SK-N-SH (cell line): ENCODE measurements at regions of chr2 and their contacts with region 1.

Region 1: GRCh38 chr2:45585267-45585861 is 25.7 kb downstream of the SRBD1 start:
- DNase-seq: peak; percentile 41
- H3K4me3 ChIP-seq: no peak overlapping the region
- H3K27ac ChIP-seq: no peak overlapping the region
- H3K4me1 ChIP-seq: no peaks in the 10 kb centered on the region
- H3K27me3 ChIP-seq: no peaks in the 10 kb centered on the region
- CTCF ChIP-seq: peak; percentile 81
- EP300 ChIP-seq: no peak
- RAD21 ChIP-seq: peak; percentile 66

Region 2: DNA sequence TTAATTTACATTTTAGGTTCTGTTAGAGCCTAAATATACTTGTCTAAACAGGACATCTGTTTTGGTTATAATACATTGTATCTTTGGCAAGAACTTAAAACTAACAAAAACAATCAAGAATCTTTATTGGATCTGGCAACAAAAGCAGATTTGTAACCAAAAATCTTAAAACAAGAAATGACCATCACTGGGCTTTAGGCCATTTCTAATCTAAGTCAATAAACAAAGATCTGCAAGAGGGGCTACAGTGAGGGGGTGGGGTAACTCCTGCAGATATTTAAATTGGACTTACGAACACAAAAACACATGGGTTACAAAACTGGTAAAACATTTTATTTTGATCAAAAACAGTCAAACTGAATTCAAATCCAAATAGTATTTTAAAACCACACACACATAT is 51.6 kb before region 1 on chr2:
- CTCF ChIA-PET with region 1: interaction called, 10 read pairs
- POLR2A ChIA-PET with region 1: no interaction called
- DNase-seq: no peak
- H3K4me3 ChIP-seq: no peak overlapping the region
- H3K27ac ChIP-seq: no peak overlapping the region
- H3K4me1 ChIP-seq: no peaks in the 10 kb centered on the region
- H3K27me3 ChIP-seq: no peaks in the 10 kb centered on the region
- CTCF ChIP-seq: no peak
- EP300 ChIP-seq: no peak
- RAD21 ChIP-seq: no peak

Region 3: DNA sequence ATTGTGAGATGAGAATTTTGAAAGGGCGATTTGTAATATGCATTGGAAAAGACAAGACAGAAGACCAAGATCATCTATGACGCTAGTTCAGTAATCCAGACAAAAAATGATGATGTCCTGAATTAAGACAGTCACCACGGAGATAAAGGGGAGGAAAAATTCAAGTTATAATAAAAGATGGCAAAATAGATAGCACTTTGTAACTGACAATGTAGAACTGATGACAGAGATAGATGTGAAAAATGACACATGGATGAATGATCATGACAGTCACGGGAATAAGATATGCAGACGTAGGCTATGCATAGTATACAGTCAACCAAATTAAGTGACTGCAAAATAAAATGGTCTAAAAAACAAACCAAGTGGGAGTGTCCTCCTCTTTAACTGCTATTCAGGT is 33.5 kb before region 1 on chr2:
- CTCF ChIA-PET with region 1: interaction called, 11 read pairs
- POLR2A ChIA-PET with region 1: no interaction called
- DNase-seq: no peak
- H3K4me3 ChIP-seq: no peak overlapping the region
- H3K27ac ChIP-seq: no peak overlapping the region
- H3K4me1 ChIP-seq: no peaks in the 10 kb centered on the region; a peak in 1 of 4 replicates
- H3K27me3 ChIP-seq: no peaks in the 10 kb centered on the region
- CTCF ChIP-seq: no peak
- EP300 ChIP-seq: no peak
- RAD21 ChIP-seq: no peak

Region 4: DNA sequence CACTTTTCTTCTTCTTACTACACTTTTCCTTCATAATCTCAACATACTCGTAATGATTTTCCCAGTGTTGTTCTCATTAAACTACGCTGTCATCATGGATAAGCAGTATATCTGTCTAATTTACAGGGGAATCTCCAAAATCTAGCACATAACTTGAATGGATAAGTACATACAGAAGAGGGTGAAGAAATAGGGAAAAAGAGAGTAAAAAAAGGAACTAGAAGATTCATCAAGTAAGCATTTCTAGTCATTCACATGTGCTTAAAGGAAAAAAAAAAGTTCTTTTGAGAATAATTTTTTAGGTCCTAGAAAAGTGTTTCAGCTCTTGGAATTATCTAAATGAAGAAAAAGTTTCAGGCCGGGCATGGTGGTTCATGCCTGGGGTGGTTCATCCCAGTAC is 25.9 kb before region 1 on chr2:
- CTCF ChIA-PET with region 1: interaction called, 10 read pairs
- POLR2A ChIA-PET with region 1: no interaction called
- DNase-seq: no peak
- H3K4me3 ChIP-seq: no peak overlapping the region
- H3K27ac ChIP-seq: no peak overlapping the region
- H3K4me1 ChIP-seq: no peaks in the 10 kb centered on the region
- H3K27me3 ChIP-seq: no peaks in the 10 kb centered on the region
- CTCF ChIP-seq: no peak
- EP300 ChIP-seq: no peak
- RAD21 ChIP-seq: no peak

Region 5: GRCh38 chr2:45567288-45567963 is 17.9 kb before region 1 on chr2:
- CTCF ChIA-PET with region 1: interaction called, 27 read pairs
- POLR2A ChIA-PET with region 1: no interaction called
- DNase-seq: no peak
- H3K4me3 ChIP-seq: no peak overlapping the region
- H3K27ac ChIP-seq: no peak overlapping the region
- H3K4me1 ChIP-seq: peaks cover 0 to 28% of the 10 kb centered on the region in 2 experiments; a peak in 2 of 4 replicates
- H3K27me3 ChIP-seq: no peaks in the 10 kb centered on the region
- CTCF ChIP-seq: no peak
- EP300 ChIP-seq: no peak
- RAD21 ChIP-seq: no peak

Region 6: GRCh38 chr2:45595721-45596435 is 10.5 kb after region 1 on chr2:
- CTCF ChIA-PET with region 1: interaction called, 109 read pairs
- POLR2A ChIA-PET with region 1: no interaction called
- DNase-seq: no peak
- H3K4me3 ChIP-seq: no peak overlapping the region
- H3K27ac ChIP-seq: peak overlapping the region in 1 of 2 experiments; percentile 27; a peak in 2 of 4 replicates
- H3K4me1 ChIP-seq: no peaks in the 10 kb centered on the region; a peak in 2 of 4 replicates
- H3K27me3 ChIP-seq: no peaks in the 10 kb centered on the region
- CTCF ChIP-seq: no peak
- EP300 ChIP-seq: no peak
- RAD21 ChIP-seq: no peak

Region 7: GRCh38 chr2:45611020-45611737 is 25.8 kb after region 1 on chr2 and contains the start of gene SRBD1:
- CTCF ChIA-PET with region 1: interaction called, 109 read pairs
- POLR2A ChIA-PET with region 1: interaction called, 3 read pairs
- DNase-seq: peak; percentile 92
- H3K4me3 ChIP-seq: peak within 1 kb of the TSS; percentile 77 to 91
- H3K27ac ChIP-seq: peak within 1 kb of the TSS; percentile 83 to 89
- H3K4me1 ChIP-seq: peaks cover 5 to 14% of the 10 kb centered on the region in 2 experiments; a peak in 3 of 4 replicates
- H3K27me3 ChIP-seq: no peaks in the 10 kb centered on the region
- CTCF ChIP-seq: no peak
- EP300 ChIP-seq: no peak
- RAD21 ChIP-seq: no peak
- polyA plus RNA-seq, gene SRBD1: 3.2 and 3.3 TPM in 2 replicates

Region 8: GRCh38 chr2:45864121-45864520 is 278.8 kb after region 1 on chr2:
- CTCF ChIA-PET with region 1: no interaction called
- POLR2A ChIA-PET with region 1: no interaction called
- DNase-seq: no peak
- H3K4me3 ChIP-seq: no peak overlapping the region
- H3K27ac ChIP-seq: no peak overlapping the region
- H3K4me1 ChIP-seq: peaks cover 9 to 11% of the 10 kb centered on the region in 2 experiments; a peak in 3 of 4 replicates
- H3K27me3 ChIP-seq: no peaks in the 10 kb centered on the region
- CTCF ChIP-seq: no peak
- EP300 ChIP-seq: no peak
- RAD21 ChIP-seq: no peak

Region 9: GRCh38 chr2:46954948-46955571 is 1369.7 kb after region 1 on chr2:
- CTCF ChIA-PET with region 1: no interaction called
- POLR2A ChIA-PET with region 1: no interaction called
- DNase-seq: no peak
- H3K4me3 ChIP-seq: no peak overlapping the region
- H3K27ac ChIP-seq: peak overlapping the region; percentile 50 to 89
- H3K4me1 ChIP-seq: peaks cover 2 to 13% of the 10 kb centered on the region in 2 experiments; a peak in 3 of 4 replicates
- H3K27me3 ChIP-seq: no peaks in the 10 kb centered on the region
- CTCF ChIP-seq: no peak
- EP300 ChIP-seq: peak in 1 of 2 experiments; percentile 54; a peak in 1 of 4 replicates
- RAD21 ChIP-seq: no peak